B cell (primary cell): ENCODE measurements at regions of chr17 and their contacts with region 1.

Region 1: DNA sequence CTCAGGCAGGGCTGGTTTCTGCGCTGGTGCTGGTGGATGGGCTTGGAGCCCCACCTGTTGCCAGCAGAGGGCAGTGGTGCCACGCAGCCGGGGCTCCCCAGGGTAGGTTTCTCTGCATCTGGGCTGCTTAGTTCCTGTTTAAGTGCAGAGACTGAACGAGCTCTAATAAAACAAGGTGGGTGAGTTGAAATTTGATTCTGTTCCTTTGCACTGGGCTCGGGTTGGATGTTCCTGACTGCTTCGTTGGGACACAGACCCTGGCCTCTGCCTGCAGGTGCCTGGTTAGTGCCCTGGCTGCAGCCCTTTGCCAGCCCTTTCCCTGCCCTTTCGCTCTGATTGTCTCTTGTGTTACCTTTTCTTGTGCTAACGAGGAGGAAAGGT is 30.0 kb downstream of the TBCD start:
- DNase-seq: peak; percentile 90
- ATAC-seq: peak; percentile 100
- H3K4me3 ChIP-seq: no peak overlapping the region
- H3K4me3 Mint-ChIP-seq: no peak overlapping the region
- H3K27ac ChIP-seq: no peak overlapping the region
- H3K27ac Mint-ChIP-seq: no peak overlapping the region
- H3K4me1 ChIP-seq: peaks cover 3 to 13% of the 10 kb centered on the region in 2 donors
- H3K4me1 Mint-ChIP-seq: peaks cover 7% of the 10 kb centered on the region
- H3K27me3 ChIP-seq: no peaks in the 10 kb centered on the region
- H3K27me3 Mint-ChIP-seq: no peaks in the 10 kb centered on the region
- CTCF ChIP-seq: peak; percentile 99

Region 2: DNA sequence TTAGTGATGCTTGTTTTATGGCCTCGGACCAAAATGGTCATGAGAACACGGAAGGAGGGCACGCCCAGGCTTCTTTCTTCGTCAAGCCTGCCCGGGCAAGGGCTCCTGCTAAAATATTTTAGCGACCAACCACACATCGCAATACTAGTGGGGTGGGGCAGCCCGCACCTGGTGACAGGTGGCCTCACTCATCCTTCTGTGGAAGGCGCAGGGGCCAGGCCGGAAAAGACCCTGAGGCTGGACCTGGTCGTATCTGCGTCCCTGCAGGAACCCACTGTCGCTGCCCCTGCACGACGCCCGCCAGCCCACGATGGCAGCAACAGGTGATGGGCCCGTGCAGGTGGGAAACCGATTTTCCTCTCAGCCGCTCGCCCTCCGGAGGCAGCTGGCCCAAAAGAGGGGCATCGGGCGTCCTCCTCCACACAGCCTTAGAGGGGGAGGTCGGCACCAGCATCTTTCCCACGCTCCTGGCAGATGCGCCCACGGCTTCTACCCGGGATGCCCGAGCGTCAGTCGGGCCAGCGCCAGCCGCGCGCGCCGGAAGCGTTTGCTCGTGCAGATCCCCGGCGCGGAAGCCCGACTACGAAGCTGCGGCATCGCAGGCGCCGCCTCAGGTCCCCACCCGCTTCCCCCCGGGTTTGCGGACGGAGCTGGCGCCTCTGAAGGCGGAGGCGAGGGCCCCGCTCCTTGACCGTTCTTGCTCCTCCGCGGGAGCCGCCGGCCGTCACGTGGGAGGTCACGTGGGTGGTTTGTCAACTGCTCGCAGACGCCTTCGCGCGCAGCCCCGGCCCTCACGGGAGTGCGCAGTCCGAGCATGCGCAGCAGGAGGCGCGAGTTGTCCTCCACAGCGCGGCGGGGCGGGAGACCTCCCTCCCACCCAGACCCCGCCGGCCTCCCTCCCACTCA is 285.1 kb before region 1 on chr17:
- CTCF ChIA-PET with region 1: no interaction called
- POLR2A ChIA-PET with region 1: no interaction called
- intact Hi-C with region 1: no loop called
- DNase-seq: peak; percentile 93
- ATAC-seq: peak; percentile 70
- H3K4me3 ChIP-seq: peak overlapping the region in 4 of 5 experiments; percentile 55 to 79 (median 68)
- H3K4me3 Mint-ChIP-seq: peak overlapping the region; percentile 86
- H3K27ac ChIP-seq: peak overlapping the region; percentile 64 to 77
- H3K27ac Mint-ChIP-seq: peak overlapping the region; percentile 89
- H3K4me1 ChIP-seq: peaks cover 7 to 34% of the 10 kb centered on the region in 2 donors
- H3K4me1 Mint-ChIP-seq: peaks cover 25% of the 10 kb centered on the region
- H3K27me3 ChIP-seq: no peaks in the 10 kb centered on the region
- H3K27me3 Mint-ChIP-seq: no peaks in the 10 kb centered on the region
- CTCF ChIP-seq: no peak

Region 3: DNA sequence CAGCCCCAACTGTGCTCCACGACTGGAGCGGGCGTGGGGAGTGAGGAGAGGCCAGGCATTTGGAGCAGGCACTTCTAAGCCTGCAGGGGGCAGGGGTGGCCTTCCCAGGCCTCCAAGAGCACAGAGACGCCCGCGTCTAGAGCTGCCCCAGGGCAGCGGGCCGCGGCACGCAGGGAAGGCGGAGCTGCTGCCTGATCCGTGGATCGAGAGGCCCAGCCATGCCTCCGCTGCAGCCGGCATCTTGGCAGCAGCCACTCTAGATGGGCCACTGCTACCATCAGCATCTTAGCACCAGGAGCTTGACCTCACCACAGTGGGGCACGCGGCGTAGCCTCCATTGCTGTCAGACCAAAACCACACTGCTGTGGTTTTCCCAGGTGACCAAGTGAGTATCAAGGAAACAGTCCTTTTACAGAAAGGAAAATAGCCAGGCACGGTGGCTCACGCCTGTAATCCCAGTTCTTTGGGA is 113.2 kb before region 1 on chr17:
- CTCF ChIA-PET with region 1: interaction called, 25 read pairs
- POLR2A ChIA-PET with region 1: no interaction called
- intact Hi-C with region 1: loop called (anchors 1 kb)
- DNase-seq: peak; percentile 66
- ATAC-seq: peak; percentile 91
- H3K4me3 ChIP-seq: peak overlapping the region in 2 of 5 experiments; percentile 19 to 36
- H3K4me3 Mint-ChIP-seq: peak overlapping the region; percentile 65
- H3K27ac ChIP-seq: no peak overlapping the region
- H3K27ac Mint-ChIP-seq: no peak overlapping the region
- H3K4me1 ChIP-seq: peaks cover 0 to 6% of the 10 kb centered on the region in 2 donors
- H3K4me1 Mint-ChIP-seq: peaks cover 6% of the 10 kb centered on the region
- H3K27me3 ChIP-seq: no peaks in the 10 kb centered on the region
- H3K27me3 Mint-ChIP-seq: no peaks in the 10 kb centered on the region
- CTCF ChIP-seq: peak; percentile 59

Region 4: DNA sequence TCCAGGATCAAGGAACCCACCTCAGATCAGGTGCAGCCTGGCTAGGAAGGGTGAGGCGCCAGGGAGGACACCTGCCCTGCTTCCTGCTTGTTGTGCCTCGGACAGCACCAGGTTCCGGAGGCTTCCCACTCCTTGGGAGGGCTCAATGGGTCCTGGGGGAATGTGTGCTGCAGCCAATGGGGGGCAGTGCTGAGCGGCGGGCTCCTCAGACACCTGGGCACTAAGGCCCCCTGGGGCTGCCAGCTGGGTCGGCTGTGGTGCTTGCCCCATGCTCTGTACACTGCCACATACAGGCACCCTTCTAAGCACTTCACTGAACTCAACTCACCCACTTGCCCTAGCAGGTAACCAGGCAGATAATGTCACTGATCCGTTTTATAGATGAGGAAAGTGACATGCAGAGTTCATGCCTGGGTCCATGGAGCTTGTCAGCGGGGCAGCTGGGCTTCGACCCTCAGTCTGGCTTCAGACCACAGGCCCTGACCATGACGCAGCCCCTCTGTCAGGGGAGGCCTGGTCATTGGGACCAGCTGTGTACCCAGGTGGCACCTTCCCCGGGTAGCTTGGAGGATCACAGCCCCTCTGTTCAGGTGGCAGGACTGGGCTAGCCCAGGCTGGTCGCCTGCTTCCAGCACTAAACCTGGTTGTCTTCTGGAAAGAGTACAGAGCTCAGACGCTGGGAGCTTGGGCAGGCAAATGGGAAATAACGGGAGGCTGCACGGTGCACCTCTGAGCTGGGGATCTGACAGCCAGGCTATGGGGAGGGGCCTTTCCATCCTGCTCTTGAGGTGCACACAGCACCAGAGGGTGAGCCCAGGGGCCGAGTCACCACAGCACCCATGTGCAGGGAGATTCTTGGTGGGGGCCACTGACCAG is 38.3 kb before region 1 on chr17:
- CTCF ChIA-PET with region 1: no interaction called
- POLR2A ChIA-PET with region 1: no interaction called
- intact Hi-C with region 1: no loop called
- DNase-seq: no peak
- ATAC-seq: no peak
- H3K4me3 ChIP-seq: no peak overlapping the region
- H3K4me3 Mint-ChIP-seq: no peak overlapping the region
- H3K27ac ChIP-seq: no peak overlapping the region
- H3K27ac Mint-ChIP-seq: no peak overlapping the region
- H3K4me1 ChIP-seq: no peaks in the 10 kb centered on the region
- H3K4me1 Mint-ChIP-seq: no peaks in the 10 kb centered on the region
- H3K27me3 ChIP-seq: no peaks in the 10 kb centered on the region
- H3K27me3 Mint-ChIP-seq: no peaks in the 10 kb centered on the region
- CTCF ChIP-seq: no peak

Region 5: GRCh38 chr17:82871056-82871903 is 89.4 kb after region 1 on chr17:
- CTCF ChIA-PET with region 1: interaction called, 43 read pairs
- POLR2A ChIA-PET with region 1: interaction called, 5 read pairs
- intact Hi-C with region 1: loop called (anchors 1 kb)
- DNase-seq: peak; percentile 95
- ATAC-seq: peak; percentile 82
- H3K4me3 ChIP-seq: peak overlapping the region in 3 of 5 experiments; percentile 18 to 30 (median 25)
- H3K4me3 Mint-ChIP-seq: peak overlapping the region; percentile 82
- H3K27ac ChIP-seq: peak overlapping the region; percentile 78 to 79
- H3K27ac Mint-ChIP-seq: peak overlapping the region; percentile 95
- H3K4me1 ChIP-seq: peaks cover 53 to 55% of the 10 kb centered on the region in 2 donors
- H3K4me1 Mint-ChIP-seq: peaks cover 56% of the 10 kb centered on the region
- H3K27me3 ChIP-seq: peaks cover 0 to 29% (median 0%) of the 10 kb centered on the region in 4 experiments
- H3K27me3 Mint-ChIP-seq: peaks cover 4% of the 10 kb centered on the region
- CTCF ChIP-seq: peak; percentile 73

Region 6: GRCh38 chr17:82909322-82909904 is 127.5 kb after region 1 on chr17:
- CTCF ChIA-PET with region 1: interaction called, 68 read pairs
- POLR2A ChIA-PET with region 1: interaction called, 3 read pairs
- intact Hi-C with region 1: no loop called
- DNase-seq: no peak
- ATAC-seq: no peak
- H3K4me3 ChIP-seq: no peak overlapping the region
- H3K4me3 Mint-ChIP-seq: no peak overlapping the region
- H3K27ac ChIP-seq: no peak overlapping the region
- H3K27ac Mint-ChIP-seq: no peak overlapping the region
- H3K4me1 ChIP-seq: peaks cover 19 to 21% of the 10 kb centered on the region in 2 donors
- H3K4me1 Mint-ChIP-seq: peaks cover 20% of the 10 kb centered on the region
- H3K27me3 ChIP-seq: no peaks in the 10 kb centered on the region
- H3K27me3 Mint-ChIP-seq: no peaks in the 10 kb centered on the region
- CTCF ChIP-seq: no peak

Region 7: GRCh38 chr17:82962864-82963684 is 181.2 kb after region 1 on chr17:
- CTCF ChIA-PET with region 1: interaction called, 11 read pairs
- POLR2A ChIA-PET with region 1: no interaction called
- intact Hi-C with region 1: loop called (anchors 1 kb)
- DNase-seq: peak; percentile 47
- ATAC-seq: peak; percentile 63
- H3K4me3 ChIP-seq: no peak overlapping the region
- H3K4me3 Mint-ChIP-seq: peak overlapping the region; percentile 1
- H3K27ac ChIP-seq: no peak overlapping the region
- H3K27ac Mint-ChIP-seq: no peak overlapping the region
- H3K4me1 ChIP-seq: peaks cover 4 to 11% of the 10 kb centered on the region in 2 donors
- H3K4me1 Mint-ChIP-seq: peaks cover 25% of the 10 kb centered on the region
- H3K27me3 ChIP-seq: peaks cover 0 to 13% (median 3%) of the 10 kb centered on the region in 4 experiments
- H3K27me3 Mint-ChIP-seq: peaks cover 5% of the 10 kb centered on the region
- CTCF ChIP-seq: peak; percentile 28

Region 8: GRCh38 chr17:83200202-83200699 is 418.4 kb after region 1 on chr17:
- CTCF ChIA-PET with region 1: interaction called, 65 read pairs
- POLR2A ChIA-PET with region 1: no interaction called
- intact Hi-C with region 1: no loop called
- DNase-seq: peak; percentile 69
- ATAC-seq: peak; percentile 44
- H3K4me3 ChIP-seq: peak overlapping the region in 4 of 5 experiments; percentile 11 to 63 (median 38)
- H3K4me3 Mint-ChIP-seq: peak overlapping the region; percentile 95
- H3K27ac ChIP-seq: peak overlapping the region; percentile 73 to 84
- H3K27ac Mint-ChIP-seq: peak overlapping the region; percentile 97
- H3K4me1 ChIP-seq: peaks cover 27 to 33% of the 10 kb centered on the region in 2 donors
- H3K4me1 Mint-ChIP-seq: peaks cover 36% of the 10 kb centered on the region
- H3K27me3 ChIP-seq: peaks cover 0 to 5% (median 0%) of the 10 kb centered on the region in 4 experiments
- H3K27me3 Mint-ChIP-seq: no peaks in the 10 kb centered on the region
- CTCF ChIP-seq: no peak